A549 (cell line): ENCODE measurements at regions of chr20 and their contacts with region 1.

Region 1: DNA sequence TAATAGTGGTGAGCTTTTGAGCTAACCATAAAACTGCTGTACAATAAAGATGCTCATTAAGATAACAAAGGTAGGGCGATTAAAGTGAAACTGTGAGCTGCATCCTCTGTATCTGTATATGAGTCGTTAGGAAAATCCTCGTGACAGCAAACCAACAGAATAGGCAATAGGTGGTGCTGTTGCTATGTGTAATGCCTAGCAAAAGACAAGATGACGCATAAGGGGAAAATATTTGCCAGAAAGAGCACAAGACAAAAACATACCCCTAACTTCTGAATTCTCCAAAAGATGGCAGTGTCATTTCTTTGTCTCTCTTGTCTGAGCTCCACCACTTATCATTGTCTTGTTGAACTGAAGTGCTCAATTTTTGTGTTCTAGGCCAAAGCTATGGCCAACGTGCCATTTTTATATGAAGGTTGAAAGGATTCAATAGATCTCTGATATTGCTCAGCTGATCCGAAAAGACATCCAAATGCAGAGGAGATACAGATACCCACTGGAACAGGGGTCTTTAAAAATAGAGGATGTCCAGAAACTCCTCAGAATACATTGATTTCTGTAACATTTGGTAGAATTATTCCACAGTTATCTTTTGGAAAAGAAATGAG is 56.3 kb upstream of the ANKEF1 start:
- DNase-seq: peak; percentile 63 to 94
- ATAC-seq: peak; percentile 94 to 95
- H3K4me3 ChIP-seq: no peak overlapping the region; the same call in 2 of the 3 replicates
- H3K27ac ChIP-seq: peak overlapping the region; percentile 33 to 74
- H3K4me1 ChIP-seq: peaks cover 21% of the 10 kb centered on the region; the same call in 2 of the 3 replicates
- CTCF ChIP-seq: peak; percentile 100
- EP300 ChIP-seq: peak in 1 of 2 experiments; percentile 31; a peak in 1 of 5 replicates
- POLR2A ChIP-seq: no peak
- RAD21 ChIP-seq: peak; percentile 100

Region 2: GRCh38 chr20:9857403-9857802 is 121.1 kb before region 1 on chr20:
- CTCF ChIA-PET with region 1: no interaction called
- POLR2A ChIA-PET with region 1: no interaction called
- DNase-seq: no peak
- ATAC-seq: no peak
- H3K4me3 ChIP-seq: no peak overlapping the region
- H3K27ac ChIP-seq: no peak overlapping the region
- H3K4me1 ChIP-seq: no peaks in the 10 kb centered on the region
- CTCF ChIP-seq: no peak
- EP300 ChIP-seq: no peak
- POLR2A ChIP-seq: no peak
- RAD21 ChIP-seq: no peak

Region 3: DNA sequence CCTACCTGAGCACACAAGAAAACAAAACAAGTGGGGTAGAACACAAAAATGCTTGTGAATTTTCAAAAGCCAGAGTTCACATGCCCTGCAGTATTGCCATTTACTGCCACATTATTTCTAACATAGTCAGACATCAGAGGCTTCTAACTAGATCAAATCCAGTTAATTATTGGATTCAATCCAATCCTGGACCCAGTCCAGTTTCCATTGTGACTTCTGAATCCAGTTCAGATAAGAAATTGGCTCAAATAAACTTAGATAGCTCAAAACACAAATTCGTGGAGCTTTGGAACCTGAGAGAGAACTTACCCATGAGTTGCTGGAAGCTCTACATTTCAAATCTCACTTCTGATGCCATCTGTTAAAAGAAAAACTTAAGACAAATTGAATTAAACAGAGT is 28.9 kb before region 1 on chr20:
- CTCF ChIA-PET with region 1: interaction called, 12 read pairs
- POLR2A ChIA-PET with region 1: no interaction called
- DNase-seq: no peak
- ATAC-seq: no peak
- H3K4me3 ChIP-seq: no peak overlapping the region
- H3K27ac ChIP-seq: no peak overlapping the region
- H3K4me1 ChIP-seq: peaks cover 9% of the 10 kb centered on the region; the same call in 1 of the 3 replicates
- CTCF ChIP-seq: no peak
- EP300 ChIP-seq: no peak
- POLR2A ChIP-seq: no peak
- RAD21 ChIP-seq: no peak

Region 4: DNA sequence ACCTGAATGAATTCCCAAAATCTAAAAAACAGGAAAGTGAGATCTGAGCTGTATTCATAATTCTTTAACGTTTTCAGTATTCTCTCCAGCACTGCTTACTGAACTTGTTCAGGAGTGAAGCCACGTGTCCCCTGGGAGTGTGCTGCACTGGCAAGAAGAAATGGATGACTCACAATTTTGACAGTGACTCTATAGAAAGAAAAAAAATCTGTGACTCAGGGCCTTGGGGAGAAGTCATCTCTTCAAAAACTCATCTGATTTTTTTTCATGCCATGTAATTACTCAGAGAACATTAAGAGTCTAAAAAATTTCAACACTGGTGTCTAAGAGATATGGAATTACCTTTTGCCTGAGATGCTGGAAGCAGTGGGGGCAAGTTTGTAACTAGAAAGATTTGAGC is 96.0 kb after region 1 on chr20:
- CTCF ChIA-PET with region 1: interaction called, 60 read pairs
- POLR2A ChIA-PET with region 1: no interaction called
- DNase-seq: peak; percentile 75 to 81
- ATAC-seq: peak; percentile 87 to 92
- H3K4me3 ChIP-seq: no peak overlapping the region
- H3K27ac ChIP-seq: peak overlapping the region; percentile 67 to 82
- H3K4me1 ChIP-seq: peaks cover 46% of the 10 kb centered on the region
- CTCF ChIP-seq: no peak
- EP300 ChIP-seq: peak in 1 of 2 experiments; percentile 49; a peak in 1 of 5 replicates
- POLR2A ChIP-seq: no peak
- RAD21 ChIP-seq: 0 out of 5 replicates have a peak, but pooled peaks of 1 of the 2 experiments have one; percentile 1

Region 5: GRCh38 chr20:10219452-10219791 is 240.9 kb after region 1 on chr20:
- CTCF ChIA-PET with region 1: interaction called, 18 read pairs
- POLR2A ChIA-PET with region 1: interaction called, 5 read pairs
- DNase-seq: peak; percentile 56 to 74
- ATAC-seq: peak; percentile 62 to 74
- H3K4me3 ChIP-seq: peak overlapping the region; percentile 70
- H3K27ac ChIP-seq: peak overlapping the region; percentile 77 to 93
- H3K4me1 ChIP-seq: peaks cover 63% of the 10 kb centered on the region
- CTCF ChIP-seq: no peak
- EP300 ChIP-seq: no peak
- POLR2A ChIP-seq: peak; percentile 14; the same call in 1 of the 2 replicates
- RAD21 ChIP-seq: peak; percentile 22 to 56; a peak in 4 of 5 replicates

Region 6: GRCh38 chr20:10306440-10307358 is 328.2 kb after region 1 on chr20:
- CTCF ChIA-PET with region 1: interaction called, 11 read pairs
- POLR2A ChIA-PET with region 1: no interaction called
- DNase-seq: no peak
- ATAC-seq: peak in 1 of 2 experiments; percentile 56; a peak in 3 of 6 replicates
- H3K4me3 ChIP-seq: no peak overlapping the region
- H3K27ac ChIP-seq: peak overlapping the region; percentile 76 to 83
- H3K4me1 ChIP-seq: peaks cover 81% of the 10 kb centered on the region
- CTCF ChIP-seq: no peak
- EP300 ChIP-seq: peak; percentile 50 to 64; a peak in 2 of 5 replicates
- POLR2A ChIP-seq: no peak
- RAD21 ChIP-seq: 0 out of 5 replicates have a peak, but pooled peaks of 1 of the 2 experiments have one; percentile 18

Region 7: DNA sequence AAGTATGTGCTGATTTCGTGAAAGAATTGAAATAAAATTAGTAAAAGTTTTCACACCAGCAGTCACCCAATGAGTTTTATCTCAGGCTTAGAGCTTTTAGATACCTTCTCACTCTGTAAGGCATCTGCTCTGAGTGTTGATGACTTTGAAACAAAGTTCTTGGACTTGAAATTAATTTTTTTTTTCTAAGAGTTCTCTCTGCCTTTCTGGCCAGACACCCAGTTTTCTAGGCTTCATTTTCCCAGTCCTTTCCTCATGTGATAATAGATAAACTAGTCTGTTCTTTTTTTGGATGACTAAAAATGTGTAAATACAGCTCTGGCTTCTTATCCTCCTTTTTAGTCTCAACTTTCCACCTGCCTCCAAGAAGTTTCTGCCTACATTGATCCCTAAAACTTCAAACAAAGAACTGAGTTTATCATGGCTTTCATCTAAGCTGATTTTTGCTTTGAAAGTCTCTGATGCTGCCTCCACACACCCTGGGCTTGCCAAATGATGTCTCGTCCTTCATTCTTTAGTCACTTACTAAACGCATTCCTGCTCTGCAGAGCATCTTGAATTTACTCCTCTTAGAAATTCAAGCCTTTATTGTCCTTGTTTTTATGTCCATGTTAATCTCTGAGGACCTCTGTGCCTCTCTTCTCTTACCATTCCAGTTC is 489.3 kb after region 1 on chr20:
- CTCF ChIA-PET with region 1: interaction called, 20 read pairs
- POLR2A ChIA-PET with region 1: no interaction called
- DNase-seq: no peak
- ATAC-seq: no peak
- H3K4me3 ChIP-seq: no peak overlapping the region
- H3K27ac ChIP-seq: peak overlapping the region; percentile 37 to 74
- H3K4me1 ChIP-seq: peaks cover 46% of the 10 kb centered on the region
- CTCF ChIP-seq: no peak
- EP300 ChIP-seq: no peak
- POLR2A ChIP-seq: no peak
- RAD21 ChIP-seq: no peak

Region 8: GRCh38 chr20:10673988-10674711 is 695.6 kb after region 1 on chr20 and contains the start of gene JAG1:
- CTCF ChIA-PET with region 1: interaction called, 13 read pairs
- POLR2A ChIA-PET with region 1: no interaction called
- DNase-seq: peak; percentile 97 to 99
- ATAC-seq: peak; percentile 73 to 76
- H3K4me3 ChIP-seq: peak within 1 kb of the TSS; percentile 92
- H3K27ac ChIP-seq: peak within 1 kb of the TSS; percentile 95 to 97
- H3K4me1 ChIP-seq: peaks cover 33% of the 10 kb centered on the region
- CTCF ChIP-seq: no peak
- EP300 ChIP-seq: peak in 1 of 2 experiments; percentile 10; a peak in 2 of 5 replicates
- POLR2A ChIP-seq: peak; percentile 42; the same call in 1 of the 2 replicates
- RAD21 ChIP-seq: peak in 1 of 2 experiments; percentile 14; a peak in 1 of 5 replicates
- polyA plus RNA-seq, gene JAG1: 90.0 and 141 TPM in 2 replicates